IMR-90 (cell line): ENCODE measurements at regions of chr4 and their contacts with region 1.

Region 1: DNA sequence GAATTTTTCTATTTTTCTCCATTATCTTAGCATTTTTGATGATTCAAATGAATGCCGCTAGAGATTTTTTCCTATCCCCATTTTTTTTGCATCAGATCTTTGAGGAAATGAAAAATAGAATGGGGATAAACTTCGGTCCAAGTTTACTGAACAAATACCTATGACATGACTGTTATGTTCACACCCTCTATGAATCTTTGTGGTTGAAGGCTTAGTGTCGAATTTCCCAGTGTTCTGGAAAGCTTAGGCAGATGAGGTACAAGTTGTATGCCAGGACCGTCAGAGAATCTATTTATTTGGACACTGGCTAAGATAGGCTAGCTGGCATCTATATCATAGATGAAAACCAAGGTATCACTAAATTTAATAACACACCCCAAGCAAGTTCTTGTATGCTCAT is 123.4 kb downstream of the SPCS3 start:
- DNase-seq: peak; percentile 96
- ATAC-seq: peak; percentile 89
- H3K4me3 ChIP-seq: no peak overlapping the region
- H3K27ac ChIP-seq: no peak overlapping the region
- H3K4me1 ChIP-seq: peaks cover 6% of the 10 kb centered on the region; the same call in 1 of the 2 replicates
- H3K27me3 ChIP-seq: no peaks in the 10 kb centered on the region
- CTCF ChIP-seq: no peak
- POLR2A ChIP-seq: no peak
- RAD21 ChIP-seq: no peak

Region 2: DNA sequence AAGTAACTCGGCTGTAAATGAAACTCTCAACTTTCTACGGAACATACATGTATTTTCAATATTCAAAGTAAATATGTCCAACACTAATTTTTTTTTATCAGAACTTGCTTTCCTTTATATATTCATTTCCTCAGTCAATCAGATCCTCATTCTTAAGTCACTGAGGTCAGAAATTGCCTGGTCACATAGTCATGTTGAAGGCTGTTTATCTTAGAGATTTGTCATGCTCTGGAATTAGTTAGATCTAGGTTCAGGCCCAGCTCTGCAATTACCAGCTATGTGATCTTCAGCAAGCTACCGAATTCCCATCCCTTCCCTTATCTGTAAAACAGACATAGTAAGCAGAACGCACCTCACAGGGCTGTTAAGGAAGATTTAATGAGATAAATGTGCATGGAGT is 105.5 kb after region 1 on chr4:
- CTCF ChIA-PET with region 1: no interaction called
- POLR2A ChIA-PET with region 1: no interaction called
- dilution Hi-C with region 1: no loop called
- in situ Hi-C with region 1: no loop called
- intact Hi-C with region 1: loop called (anchors 5 kb)
- DNase-seq: peak; percentile 90
- ATAC-seq: peak; percentile 75
- H3K4me3 ChIP-seq: no peak overlapping the region
- H3K27ac ChIP-seq: no peak overlapping the region
- H3K4me1 ChIP-seq: peaks cover 14% of the 10 kb centered on the region
- H3K27me3 ChIP-seq: no peaks in the 10 kb centered on the region
- CTCF ChIP-seq: no peak
- POLR2A ChIP-seq: no peak
- RAD21 ChIP-seq: no peak